ENCODE measurements at regions of chr17 and their contacts with region 1.

Region 1: DNA sequence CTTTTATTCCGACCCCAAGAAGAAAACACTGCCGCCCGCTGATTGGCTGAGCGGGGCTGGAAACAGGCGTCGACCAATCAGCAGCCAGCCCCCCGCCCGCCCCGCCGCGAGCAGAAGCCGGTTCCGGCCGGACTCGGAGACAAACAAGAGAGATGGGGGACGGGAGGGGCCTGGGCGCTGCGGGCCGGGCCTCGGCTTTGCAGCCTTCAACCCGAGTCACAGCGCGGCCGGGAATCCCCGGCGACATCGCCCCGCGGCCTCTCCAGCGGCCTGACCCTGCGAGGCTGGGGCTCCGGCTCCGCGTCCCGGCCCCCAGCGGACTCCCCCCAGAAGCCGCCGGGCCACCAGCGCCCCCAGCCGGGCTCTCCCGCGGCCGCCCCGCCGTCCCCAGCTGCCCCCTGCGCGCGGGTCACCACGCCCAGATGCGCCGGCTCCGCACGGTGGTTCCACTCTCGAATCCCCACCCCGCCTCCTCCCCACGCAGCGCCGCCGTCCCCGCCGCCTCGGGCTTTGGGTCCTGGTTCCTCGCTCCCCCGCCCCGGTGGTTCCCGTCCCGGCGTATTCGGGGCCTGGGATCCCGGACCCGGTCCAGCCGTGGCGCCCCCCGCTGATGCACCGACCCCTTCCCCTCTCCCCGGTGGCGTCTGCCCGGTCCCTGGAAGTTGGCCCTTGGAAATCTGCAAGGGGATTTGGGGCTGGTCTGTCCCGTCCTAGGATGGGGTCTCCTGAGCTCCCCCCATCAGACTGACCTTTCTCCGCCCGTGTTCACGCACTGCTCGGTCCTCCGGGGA is 417 bp upstream of the SLC43A2 start:
- DNase-seq: peak; percentile 82
- H3K4me3 Mint-ChIP-seq: peak overlapping the region; percentile 87
- H3K27ac Mint-ChIP-seq: peak overlapping the region; percentile 68
- H3K4me1 Mint-ChIP-seq: peaks cover 9% of the 10 kb centered on the region
- H3K27me3 Mint-ChIP-seq: peaks cover 35% of the 10 kb centered on the region

Region 2: GRCh38 chr17:1275962-1276736 is 352.9 kb before region 1 on chr17:
- intact Hi-C with region 1: loop called (anchors 10 kb)
- DNase-seq: peak; percentile 60
- H3K4me3 Mint-ChIP-seq: no peak overlapping the region
- H3K27ac Mint-ChIP-seq: no peak overlapping the region
- H3K4me1 Mint-ChIP-seq: peaks cover 4% of the 10 kb centered on the region
- H3K27me3 Mint-ChIP-seq: peaks cover 33% of the 10 kb centered on the region

Region 3: GRCh38 chr17:1365445-1366039 is 263.5 kb before region 1 on chr17:
- intact Hi-C with region 1: loop called (anchors 10 kb)
- DNase-seq: peak; percentile 47
- H3K4me3 Mint-ChIP-seq: no peak overlapping the region
- H3K27ac Mint-ChIP-seq: peak overlapping the region; percentile 7
- H3K4me1 Mint-ChIP-seq: peaks cover 38% of the 10 kb centered on the region
- H3K27me3 Mint-ChIP-seq: no peaks in the 10 kb centered on the region

Region 4: DNA sequence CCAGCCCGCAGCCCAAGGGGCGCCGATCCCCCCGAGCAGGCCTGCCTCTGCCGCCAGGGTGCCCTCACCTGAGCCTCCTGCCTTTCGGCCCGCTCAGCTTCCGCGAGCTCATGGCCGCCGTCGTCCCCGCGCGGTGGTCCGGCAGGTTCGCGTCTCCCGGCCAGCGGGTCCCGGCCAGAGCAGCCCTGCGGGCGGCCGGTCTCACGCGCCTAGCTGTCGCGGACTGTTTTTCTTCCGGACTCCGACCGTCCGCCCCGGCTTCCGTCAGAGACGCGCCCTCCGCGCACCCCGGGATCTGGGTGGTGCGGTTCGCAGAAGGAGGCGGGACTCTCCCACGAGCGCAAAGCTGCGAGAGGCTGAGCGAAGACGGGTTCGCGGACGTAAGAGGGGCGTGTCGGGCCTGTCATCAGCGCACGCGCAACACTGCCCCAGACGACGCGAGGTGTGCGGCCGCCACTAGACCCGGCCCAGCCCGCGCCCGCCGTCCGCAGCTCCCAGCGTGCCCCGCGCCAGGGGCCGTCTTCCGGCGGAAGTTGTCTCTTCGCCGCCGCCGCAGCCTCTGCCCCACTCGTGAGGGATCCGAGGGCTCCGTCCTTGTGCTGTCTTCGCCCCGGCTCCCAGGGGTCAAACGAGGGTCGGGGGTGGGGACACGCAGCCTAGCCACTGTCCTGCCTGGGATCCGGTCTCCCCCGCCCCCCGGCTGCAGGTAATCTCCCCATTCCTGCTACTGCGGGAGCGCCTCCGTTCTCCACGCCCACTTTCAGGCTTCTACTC is 112.5 kb before region 1 on chr17 and contains the start of gene INPP5K:
- intact Hi-C with region 1: loop called (anchors 1 kb)
- DNase-seq: peak; percentile 99
- H3K4me3 Mint-ChIP-seq: peak within 1 kb of the TSS; percentile 84
- H3K27ac Mint-ChIP-seq: peak within 1 kb of the TSS; percentile 82
- H3K4me1 Mint-ChIP-seq: peaks cover 15% of the 10 kb centered on the region
- H3K27me3 Mint-ChIP-seq: no peaks in the 10 kb centered on the region
- total RNA-seq, gene INPP5K: 26.2 and 31.0 TPM in 2 replicates

Region 5: GRCh38 chr17:1566545-1567199 is 62.4 kb before region 1 on chr17:
- intact Hi-C with region 1: loop called (anchors 2 kb)
- DNase-seq: no peak
- H3K4me3 Mint-ChIP-seq: peak overlapping the region; percentile 70
- H3K27ac Mint-ChIP-seq: peak overlapping the region; percentile 87
- H3K4me1 Mint-ChIP-seq: peaks cover 12% of the 10 kb centered on the region
- H3K27me3 Mint-ChIP-seq: no peaks in the 10 kb centered on the region

Region 6: GRCh38 chr17:1573916-1574696 is 54.9 kb before region 1 on chr17:
- intact Hi-C with region 1: loop called (anchors 1 kb)
- DNase-seq: peak; percentile 37
- H3K4me3 Mint-ChIP-seq: no peak overlapping the region
- H3K27ac Mint-ChIP-seq: no peak overlapping the region
- H3K4me1 Mint-ChIP-seq: no peaks in the 10 kb centered on the region
- H3K27me3 Mint-ChIP-seq: no peaks in the 10 kb centered on the region

Region 7: GRCh38 chr17:1606352-1607033 is 22.6 kb before region 1 on chr17:
- intact Hi-C with region 1: loop called (anchors 1 kb)
- DNase-seq: no peak
- H3K4me3 Mint-ChIP-seq: no peak overlapping the region
- H3K27ac Mint-ChIP-seq: peak overlapping the region; percentile 98
- H3K4me1 Mint-ChIP-seq: peaks cover 30% of the 10 kb centered on the region
- H3K27me3 Mint-ChIP-seq: no peaks in the 10 kb centered on the region

Measured in activated T-helper 2 cell treated with anti-CD3 and anti-CD28 coated beads, Interferon-gamma antibody, Interleukin-2, Interleukin-4, amounts not matched to agents 10 μg/mL and 5 μg/mL and 100 μg/mL, durations not matched to agents 14 hours and 24 hours and 36 hours (primary cell).